ENCODE measurements at regions of chr16 and their contacts with region 1.

Region 1: GRCh38 chr16:81035398-81035974 is at the start of gene ATMIN:
- DNase-seq: peak; percentile 85
- H3K4me3 Mint-ChIP-seq: peak within 1 kb of the TSS; percentile 88
- H3K27ac Mint-ChIP-seq: peak within 1 kb of the TSS; percentile 65
- H3K4me1 Mint-ChIP-seq: peaks cover 27% of the 10 kb centered on the region
- H3K27me3 Mint-ChIP-seq: no peaks in the 10 kb centered on the region
- total RNA-seq, gene ATMIN: 31.2 and 32.3 TPM in 2 replicates

Region 2: GRCh38 chr16:80375973-80376372 is 659.5 kb before region 1 on chr16:
- intact Hi-C with region 1: no loop called
- DNase-seq: no peak
- H3K4me3 Mint-ChIP-seq: no peak overlapping the region
- H3K27ac Mint-ChIP-seq: no peak overlapping the region
- H3K4me1 Mint-ChIP-seq: no peaks in the 10 kb centered on the region
- H3K27me3 Mint-ChIP-seq: no peaks in the 10 kb centered on the region

Region 3: GRCh38 chr16:80974649-80975376 is 60.7 kb before region 1 on chr16:
- intact Hi-C with region 1: loop called (anchors 1 kb)
- DNase-seq: no peak
- H3K4me3 Mint-ChIP-seq: no peak overlapping the region
- H3K27ac Mint-ChIP-seq: peak overlapping the region; percentile 51
- H3K4me1 Mint-ChIP-seq: peaks cover 6% of the 10 kb centered on the region
- H3K27me3 Mint-ChIP-seq: no peaks in the 10 kb centered on the region

Region 4: GRCh38 chr16:81006814-81007696 is 28.4 kb before region 1 on chr16 and contains the starts of genes CENPN and CMC2:
- intact Hi-C with region 1: loop called (anchors 1 kb)
- DNase-seq: peak; percentile 97
- H3K4me3 Mint-ChIP-seq: peak within 1 kb of the TSS; percentile 100
- H3K27ac Mint-ChIP-seq: peak within 1 kb of the TSS; percentile 100
- H3K4me1 Mint-ChIP-seq: peaks cover 61% of the 10 kb centered on the region
- H3K27me3 Mint-ChIP-seq: peaks cover 2% of the 10 kb centered on the region
- total RNA-seq, gene CENPN: 65.6 and 67.8 TPM in 2 replicates
- total RNA-seq, gene CMC2: 141 and 156 TPM in 2 replicates

Region 5: GRCh38 chr16:81018496-81018895 is 17.0 kb before region 1 on chr16:
- intact Hi-C with region 1: loop called (anchors 2 kb)
- DNase-seq: no peak
- H3K4me3 Mint-ChIP-seq: no peak overlapping the region
- H3K27ac Mint-ChIP-seq: no peak overlapping the region
- H3K4me1 Mint-ChIP-seq: no peaks in the 10 kb centered on the region
- H3K27me3 Mint-ChIP-seq: no peaks in the 10 kb centered on the region

Region 6: DNA sequence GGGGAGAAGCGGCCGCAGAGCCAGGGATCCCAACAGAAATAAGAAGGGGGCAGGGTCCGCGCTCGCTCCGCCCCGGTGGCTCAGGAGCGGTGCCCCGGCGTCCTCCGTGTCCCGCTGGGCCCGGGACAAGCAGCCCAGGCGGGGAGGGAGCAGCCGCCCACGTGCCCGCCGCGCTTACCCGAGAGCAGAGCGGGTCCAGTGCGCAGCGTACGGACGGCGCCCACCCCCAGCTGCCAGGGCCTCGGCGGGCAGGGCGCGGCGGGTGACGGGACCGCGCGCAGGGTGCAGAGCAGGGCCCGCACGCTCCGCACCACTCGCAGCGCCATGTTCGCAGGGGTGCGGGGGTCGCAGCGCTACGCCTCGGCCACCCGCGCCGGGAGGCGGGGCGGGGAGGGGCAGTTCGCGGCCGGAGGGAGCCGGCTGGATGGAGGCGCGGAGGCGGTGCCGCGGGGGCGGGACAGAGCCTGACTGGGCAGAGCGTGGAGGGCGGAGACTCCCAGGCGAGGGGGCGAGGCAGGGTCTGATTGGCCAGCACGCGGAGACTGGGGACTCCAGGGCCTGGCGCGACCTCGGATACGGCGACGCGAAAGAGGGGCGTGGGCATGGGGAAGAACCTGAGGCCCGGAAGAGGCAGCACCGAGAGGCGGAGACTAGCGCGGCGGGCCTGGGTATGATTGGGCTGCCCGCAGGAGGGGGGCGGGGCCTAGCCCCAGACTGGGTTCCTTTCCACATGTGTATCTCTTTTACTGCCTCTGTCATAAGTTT is 60.6 kb after region 1 on chr16 and contains the start of gene GCSH:
- intact Hi-C with region 1: loop called (anchors 1 kb)
- DNase-seq: peak; percentile 99
- H3K4me3 Mint-ChIP-seq: peak within 1 kb of the TSS; percentile 81
- H3K27ac Mint-ChIP-seq: peak within 1 kb of the TSS; percentile 46
- H3K4me1 Mint-ChIP-seq: peaks cover 6% of the 10 kb centered on the region
- H3K27me3 Mint-ChIP-seq: peaks cover 3% of the 10 kb centered on the region
- total RNA-seq, gene GCSH: 16.5 and 19.1 TPM in 2 replicates

Measured in activated T-helper 1 cell treated with anti-CD3 and anti-CD28 coated beads, Interleukin-12 subunit alpha, Interleukin-12 subunit beta, Interleukin-2, Interleukin-4 antibody, amounts not matched to agents 30 ng/mL and 10 ng/mL and 1 ng/mL, durations not matched to agents 14 hours and 24 hours and 36 hours (primary cell).